ENCODE measurements at regions of chr11 and their contacts with region 1.

Region 1: GRCh38 chr11:1714973-1715885 is 18.2 kb downstream of the KRTAP5-6 start:
- DNase-seq: peak; percentile 23 to 35
- ATAC-seq: peak in 7 of 8 donors; percentile 75 to 94 (median 86)
- H3K4me3 ChIP-seq: no peak overlapping the region
- H3K27ac ChIP-seq: no peak overlapping the region
- H3K4me1 ChIP-seq: peaks cover 0 to 14% (median 0%) of the 10 kb centered on the region in 9 donors
- H3K27me3 ChIP-seq: peaks cover 0 to 3% (median 0%) of the 10 kb centered on the region in 7 donors
- CTCF ChIP-seq: no peak

Region 2: GRCh38 chr11:1739576-1739975 is 24.3 kb after region 1 on chr11:
- intact Hi-C with region 1: loop called in 1 of 10 experiments (anchors 2 kb)
- DNase-seq: no peak
- ATAC-seq: no peak
- H3K4me3 ChIP-seq: no peak overlapping the region
- H3K27ac ChIP-seq: no peak overlapping the region
- H3K4me1 ChIP-seq: peaks cover 0 to 6% (median under 1%) of the 10 kb centered on the region in 9 donors
- H3K27me3 ChIP-seq: peaks cover 3 to 58% (median 23%) of the 10 kb centered on the region in 7 donors
- CTCF ChIP-seq: no peak

Region 3: GRCh38 chr11:1749414-1750312 is 34.4 kb after region 1 on chr11:
- intact Hi-C with region 1: loop called in 1 of 10 experiments (anchors 5 kb)
- DNase-seq: no peak
- ATAC-seq: peak in 2 of 8 donors; percentile 1 to 2
- H3K4me3 ChIP-seq: peak overlapping the region in 8 of 10 donors; percentile 27 to 48 (median 40)
- H3K27ac ChIP-seq: peak overlapping the region in 2 of 10 donors; percentile 57 to 65
- H3K4me1 ChIP-seq: peaks cover 24 to 70% (median 60%) of the 10 kb centered on the region in 9 donors
- H3K27me3 ChIP-seq: peaks cover 0 to 23% (median 13%) of the 10 kb centered on the region in 7 donors
- CTCF ChIP-seq: no peak

Region 4: GRCh38 chr11:1763796-1764661 is 48.8 kb after region 1 on chr11 and contains the start of gene CTSD:
- intact Hi-C with region 1: loop called in 2 of 10 experiments (anchors 5 to 10 kb)
- DNase-seq: peak; percentile 88 to 94
- ATAC-seq: peak; percentile 62 to 88 (median 75)
- H3K4me3 ChIP-seq: peak within 1 kb of the TSS; percentile 79 to 100 (median 100)
- H3K27ac ChIP-seq: peak within 1 kb of the TSS; percentile 93 to 99 (median 97)
- H3K4me1 ChIP-seq: peaks cover 29 to 52% (median 51%) of the 10 kb centered on the region in 9 donors
- H3K27me3 ChIP-seq: no peaks in the 10 kb centered on the region
- CTCF ChIP-seq: peak in 2 of 9 donors; percentile 28 to 30
- total RNA-seq, gene CTSD: 501 to 1,070 (median 786) TPM

Region 5: GRCh38 chr11:1863352-1864216 is 148.4 kb after region 1 on chr11:
- intact Hi-C with region 1: no loop called
- DNase-seq: peak; percentile 88 to 89
- ATAC-seq: peak; percentile 86 to 94 (median 92)
- H3K4me3 ChIP-seq: peak overlapping the region in 9 of 10 donors; percentile 17 to 56 (median 48)
- H3K27ac ChIP-seq: peak overlapping the region; percentile 55 to 90 (median 84)
- H3K4me1 ChIP-seq: peaks cover 15 to 57% (median 27%) of the 10 kb centered on the region in 9 donors
- H3K27me3 ChIP-seq: peaks cover 0 to 3% (median 0%) of the 10 kb centered on the region in 7 donors
- CTCF ChIP-seq: no peak

Measured in heart right ventricle (tissue), 16 donors.